PC-9 (cell line): ENCODE measurements at regions of chr20 and their contacts with region 1.

Region 1: DNA sequence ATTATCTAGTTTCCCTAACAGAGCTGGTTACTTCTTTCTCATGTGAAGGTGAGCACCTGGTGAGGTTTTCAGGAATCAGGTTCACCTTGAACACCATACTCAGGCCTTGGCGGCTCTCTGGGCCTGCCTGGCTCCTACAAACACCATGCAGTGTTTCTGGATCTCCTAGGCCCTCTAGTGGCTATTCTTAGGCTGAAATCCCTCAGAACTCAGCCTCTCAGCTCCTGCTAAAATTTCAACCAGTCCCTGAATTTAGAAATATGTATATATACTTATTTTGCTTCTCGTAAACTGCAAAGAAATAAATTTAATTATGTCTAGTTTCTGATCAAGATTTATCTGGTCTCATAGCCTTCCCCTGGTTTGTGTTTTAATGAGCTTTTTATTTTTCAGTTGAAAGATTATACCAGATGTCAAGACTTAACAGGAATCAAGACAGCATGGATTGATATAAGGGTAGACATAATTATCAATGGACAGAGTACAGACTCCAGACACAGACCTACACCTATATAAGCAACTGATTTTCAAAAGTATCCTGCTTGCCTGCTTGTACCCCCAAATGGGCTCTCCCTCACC is 55.9 kb downstream of the ANKEF1 start:
- DNase-seq: peak; percentile 21 to 47
- H3K4me3 ChIP-seq: no peak overlapping the region
- H3K27ac ChIP-seq: no peak overlapping the region
- H3K4me1 ChIP-seq: peaks cover 27% of the 10 kb centered on the region
- H3K27me3 ChIP-seq: no peaks in the 10 kb centered on the region
- CTCF ChIP-seq: peak; percentile 83

Region 2: DNA sequence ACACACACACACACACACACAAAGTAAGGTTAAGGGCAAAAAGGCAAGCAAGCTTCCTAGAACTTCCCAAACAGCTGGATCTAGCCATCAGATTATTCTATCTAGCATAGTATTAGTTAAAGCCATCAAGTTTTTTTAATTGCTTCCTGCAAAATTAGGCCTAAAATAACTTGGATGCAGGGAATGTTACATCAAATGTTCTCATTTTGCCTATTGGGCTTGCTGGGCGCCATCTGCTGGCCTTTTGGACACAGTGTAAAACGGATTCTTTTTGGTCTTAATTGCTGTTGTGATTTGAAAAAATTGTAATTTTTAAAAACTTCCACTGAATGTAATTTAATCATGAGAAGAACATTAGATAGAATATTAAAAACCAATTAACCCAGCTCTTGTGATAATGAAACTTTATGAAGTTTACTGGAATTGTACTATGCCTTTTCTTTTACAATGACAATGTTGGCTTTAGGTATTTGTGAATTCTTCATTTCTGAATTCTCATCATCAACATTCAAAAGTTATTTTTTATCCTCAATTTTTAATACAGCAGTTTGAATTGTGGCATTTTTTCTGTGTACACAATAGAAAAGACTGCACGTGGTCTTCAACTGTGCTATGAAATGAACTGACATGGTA is 336.5 kb after region 1 on chr20:
- CTCF ChIA-PET with region 1: no interaction called
- POLR2A ChIA-PET with region 1: no interaction called
- intact Hi-C with region 1: loop called (anchors 1 kb)
- DNase-seq: peak; percentile 33 to 56
- H3K4me3 ChIP-seq: no peak overlapping the region
- H3K27ac ChIP-seq: no peak overlapping the region
- H3K4me1 ChIP-seq: no peaks in the 10 kb centered on the region
- H3K27me3 ChIP-seq: no peaks in the 10 kb centered on the region
- CTCF ChIP-seq: peak; percentile 85

Region 3: GRCh38 chr20:10536531-10536930 is 445.9 kb after region 1 on chr20:
- CTCF ChIA-PET with region 1: no interaction called
- POLR2A ChIA-PET with region 1: no interaction called
- intact Hi-C with region 1: loop called (anchors 10 kb)
- DNase-seq: peak; percentile 30 to 45
- H3K4me3 ChIP-seq: no peak overlapping the region
- H3K27ac ChIP-seq: no peak overlapping the region
- H3K4me1 ChIP-seq: peaks cover 50% of the 10 kb centered on the region
- H3K27me3 ChIP-seq: no peaks in the 10 kb centered on the region
- CTCF ChIP-seq: peak; percentile 64

Region 4: DNA sequence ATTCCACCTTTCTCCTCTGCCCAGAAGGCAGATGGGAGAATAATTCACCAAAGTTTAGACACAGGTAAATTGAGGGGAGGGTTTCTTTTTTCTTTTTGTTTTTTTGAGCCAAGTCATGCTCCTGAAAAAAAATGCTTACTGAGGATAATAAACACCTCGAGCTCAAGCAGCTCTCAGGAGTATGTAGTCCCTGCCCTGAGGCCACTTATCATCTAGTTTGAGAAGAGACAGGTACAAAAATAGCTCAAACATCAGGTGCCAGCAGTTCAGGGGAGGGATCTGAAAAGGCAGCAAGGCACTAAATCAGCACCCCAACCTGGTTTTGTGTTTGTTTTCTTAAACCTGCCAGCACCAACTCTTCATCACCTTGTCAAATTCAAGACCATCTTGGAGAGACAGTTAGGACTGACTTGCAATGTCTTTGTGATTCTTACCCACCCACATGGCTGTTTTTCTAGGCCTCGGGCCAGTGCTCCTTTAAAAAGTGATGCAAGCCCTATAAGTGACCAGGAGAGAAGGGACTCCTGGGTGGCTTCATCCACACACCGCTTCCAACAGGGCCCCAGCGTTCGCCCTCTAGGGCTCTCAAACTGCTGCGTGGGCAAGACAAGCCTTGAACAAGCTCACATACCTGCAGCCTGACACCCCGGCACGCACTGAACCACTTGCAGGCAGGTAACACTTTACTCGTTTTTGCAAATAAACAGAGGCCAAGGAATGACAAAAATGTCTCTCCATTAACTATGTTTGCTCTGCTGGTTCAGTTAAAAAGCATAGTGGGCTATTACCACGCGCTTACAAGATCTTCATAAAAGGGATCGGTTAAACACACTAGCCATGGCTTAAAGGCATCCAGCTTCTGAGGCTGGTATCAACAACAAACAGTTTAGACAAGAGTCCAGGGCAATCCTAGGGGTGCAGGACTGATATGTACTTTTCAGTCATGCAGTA is 569.2 kb after region 1 on chr20:
- CTCF ChIA-PET with region 1: interaction called, 13 read pairs
- POLR2A ChIA-PET with region 1: no interaction called
- intact Hi-C with region 1: no loop called
- DNase-seq: no peak
- H3K4me3 ChIP-seq: no peak overlapping the region
- H3K27ac ChIP-seq: no peak overlapping the region
- H3K4me1 ChIP-seq: no peaks in the 10 kb centered on the region
- H3K27me3 ChIP-seq: no peaks in the 10 kb centered on the region
- CTCF ChIP-seq: no peak